ENCODE measurements at regions of chr17 and their contacts with region 1.

Region 1: GRCh38 chr17:81094509-81095382 is 59.8 kb downstream of the BAIAP2 start:
- DNase-seq: peak; percentile 90 to 92
- H3K4me3 ChIP-seq: no peak overlapping the region
- H3K27ac ChIP-seq: peak overlapping the region; percentile 83 to 84
- H3K4me1 ChIP-seq: peaks cover 20 to 36% of the 10 kb centered on the region in 2 donors
- H3K27me3 ChIP-seq: no peaks in the 10 kb centered on the region
- CTCF ChIP-seq: no peak
- POLR2A ChIP-seq: no peak

Region 2: GRCh38 chr17:80408872-80409271 is 685.9 kb before region 1 on chr17:
- intact Hi-C with region 1: loop called (anchors 10 kb)
- DNase-seq: no peak
- H3K4me3 ChIP-seq: no peak overlapping the region
- H3K27ac ChIP-seq: no peak overlapping the region
- H3K4me1 ChIP-seq: no peaks in the 10 kb centered on the region
- H3K27me3 ChIP-seq: no peaks in the 10 kb centered on the region
- CTCF ChIP-seq: no peak
- POLR2A ChIP-seq: no peak

Region 3: DNA sequence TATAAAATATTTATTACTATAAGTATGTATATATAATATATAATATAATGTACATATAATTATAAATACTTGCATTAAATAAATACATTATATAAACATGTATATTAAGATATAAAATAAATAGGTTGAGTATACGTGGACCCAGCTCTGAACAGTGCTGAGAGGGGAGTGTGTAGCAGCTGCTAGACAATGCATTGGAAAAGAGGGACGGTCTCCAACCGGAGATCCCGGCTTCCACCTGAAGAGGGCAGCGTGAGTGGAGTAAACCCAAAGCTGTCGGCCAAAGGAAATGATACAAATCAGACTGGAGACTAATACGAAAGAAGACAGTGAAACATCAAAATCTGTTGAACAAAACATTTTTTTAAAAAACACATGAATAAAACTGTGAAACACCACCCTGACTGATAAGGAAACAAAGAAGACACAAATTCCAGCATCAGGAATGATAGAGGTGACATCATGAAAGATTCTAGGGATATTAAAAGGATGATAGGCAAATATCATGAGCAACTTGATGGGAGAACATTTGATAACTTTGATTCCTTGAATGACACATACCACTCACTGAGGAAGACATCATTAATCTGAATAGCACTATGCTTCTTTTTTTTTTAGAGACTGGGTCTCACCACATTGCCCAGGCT is 228.5 kb before region 1 on chr17:
- intact Hi-C with region 1: no loop called
- DNase-seq: peak; percentile 70 to 81
- H3K4me3 ChIP-seq: no peak overlapping the region
- H3K27ac ChIP-seq: no peak overlapping the region
- H3K4me1 ChIP-seq: no peaks in the 10 kb centered on the region
- H3K27me3 ChIP-seq: no peaks in the 10 kb centered on the region
- CTCF ChIP-seq: peak; percentile 64 to 73 (median 70)
- POLR2A ChIP-seq: no peak

Region 4: DNA sequence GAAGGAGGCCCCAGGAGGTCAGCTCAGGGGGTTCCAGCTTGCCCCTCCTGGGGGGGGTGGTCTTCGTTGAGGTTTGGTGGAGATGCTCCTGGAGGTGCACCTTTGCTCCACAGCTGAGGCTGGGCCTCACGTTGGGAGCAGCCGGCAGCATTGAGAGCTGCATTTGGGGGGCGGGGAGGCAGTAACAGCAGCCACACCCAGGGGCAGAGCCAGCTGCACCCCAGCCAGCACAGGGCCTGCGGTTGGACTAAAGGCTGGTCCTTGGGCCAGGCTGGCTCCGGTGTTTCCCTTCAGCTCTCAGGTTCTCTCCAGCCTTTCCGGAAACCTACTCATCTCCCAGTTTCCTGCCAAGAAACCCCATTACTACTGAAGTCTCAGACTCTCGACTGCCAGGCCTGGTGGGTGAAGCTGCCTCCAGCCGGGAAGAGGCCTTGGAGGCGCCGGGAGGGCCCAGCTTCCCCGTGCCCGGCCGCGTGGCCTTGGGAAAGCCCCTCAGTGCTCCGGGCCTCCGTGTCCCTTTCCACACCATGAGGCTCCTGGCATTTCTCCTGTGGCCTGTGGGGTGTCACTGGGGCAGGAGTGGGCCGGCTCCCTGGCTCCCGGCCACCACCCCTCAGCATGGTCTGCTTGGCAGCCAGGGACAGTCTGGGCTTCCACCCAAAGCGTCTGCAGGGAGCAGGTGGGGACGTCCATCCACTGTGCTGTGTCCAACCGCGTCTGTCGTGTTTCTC is 73.8 kb before region 1 on chr17:
- intact Hi-C with region 1: loop called (anchors 5 kb)
- DNase-seq: peak in 1 of 2 donors; percentile 20
- H3K4me3 ChIP-seq: no peak overlapping the region
- H3K27ac ChIP-seq: peak overlapping the region; percentile 28 to 34
- H3K4me1 ChIP-seq: no peaks in the 10 kb centered on the region
- H3K27me3 ChIP-seq: no peaks in the 10 kb centered on the region
- CTCF ChIP-seq: no peak
- POLR2A ChIP-seq: no peak

Measured in uterus (tissue), 4 donors.